B cell (primary cell): ENCODE measurements at regions of chr3 and their contacts with region 1.

Region 1: DNA sequence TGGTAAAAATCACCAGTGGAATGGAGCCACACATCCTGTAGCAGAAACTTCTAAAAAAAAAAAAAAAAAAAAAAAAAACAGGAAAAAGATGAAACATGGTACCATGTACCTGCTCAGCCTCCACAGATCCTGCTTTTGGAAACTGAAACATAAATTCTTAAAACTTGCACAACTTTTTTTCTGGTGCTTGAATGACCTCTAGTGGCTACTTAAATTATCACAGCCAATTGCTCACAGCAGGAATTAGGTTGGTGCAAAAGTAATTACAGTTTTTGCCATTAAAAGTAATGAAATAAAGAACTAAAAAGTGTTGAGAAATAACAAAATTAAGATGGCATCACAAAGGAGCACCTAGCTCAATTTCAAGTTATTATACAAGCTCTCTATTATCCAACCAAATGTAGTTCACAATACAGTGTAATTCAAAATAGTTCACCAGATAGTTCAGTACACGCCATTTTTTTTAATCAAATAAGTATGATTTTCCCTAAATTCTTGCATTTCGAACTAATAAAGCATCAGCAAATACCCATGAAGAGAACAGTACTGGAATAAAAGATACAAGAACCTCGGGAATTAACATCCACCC is 80.6 kb downstream of the ULK4 start:
- DNase-seq: peak; percentile 67
- ATAC-seq: no peak
- H3K4me3 ChIP-seq: no peak overlapping the region
- H3K4me3 Mint-ChIP-seq: no peak overlapping the region
- H3K27ac ChIP-seq: no peak overlapping the region
- H3K27ac Mint-ChIP-seq: no peak overlapping the region
- H3K4me1 ChIP-seq: no peaks in the 10 kb centered on the region
- H3K4me1 Mint-ChIP-seq: no peaks in the 10 kb centered on the region
- H3K27me3 ChIP-seq: no peaks in the 10 kb centered on the region
- H3K27me3 Mint-ChIP-seq: no peaks in the 10 kb centered on the region
- CTCF ChIP-seq: peak; percentile 82

Region 2: DNA sequence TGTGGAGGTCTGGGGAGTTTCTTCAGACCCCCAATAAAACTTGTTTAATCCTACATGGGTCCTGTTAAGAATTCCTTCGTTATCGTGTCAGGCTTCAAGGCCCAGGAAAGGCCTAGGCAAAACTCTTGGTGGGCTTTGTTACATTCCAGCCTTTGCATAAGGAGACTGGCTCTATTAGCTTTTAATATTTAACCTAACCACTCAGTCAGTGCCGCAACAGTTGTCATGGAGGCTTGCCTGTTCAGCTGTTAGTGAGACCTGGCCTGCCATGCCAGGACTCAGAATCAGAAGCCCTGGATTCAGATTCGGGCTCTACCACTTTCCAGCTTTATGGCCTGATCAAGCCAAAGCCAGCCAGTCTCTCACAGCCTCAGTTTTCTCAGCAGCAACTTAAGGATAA is 1552.3 kb before region 1 on chr3:
- CTCF ChIA-PET with region 1: interaction called, 19 read pairs
- POLR2A ChIA-PET with region 1: no interaction called
- intact Hi-C with region 1: loop called (anchors 1 kb)
- DNase-seq: no peak
- ATAC-seq: no peak
- H3K4me3 ChIP-seq: no peak overlapping the region
- H3K4me3 Mint-ChIP-seq: no peak overlapping the region
- H3K27ac ChIP-seq: no peak overlapping the region
- H3K27ac Mint-ChIP-seq: no peak overlapping the region
- H3K4me1 ChIP-seq: peaks cover 0 to 5% of the 10 kb centered on the region in 2 donors
- H3K4me1 Mint-ChIP-seq: peaks cover 3% of the 10 kb centered on the region
- H3K27me3 ChIP-seq: no peaks in the 10 kb centered on the region
- H3K27me3 Mint-ChIP-seq: peaks cover 7% of the 10 kb centered on the region
- CTCF ChIP-seq: no peak

Region 3: GRCh38 chr3:40961104-40961857 is 920.0 kb before region 1 on chr3:
- CTCF ChIA-PET with region 1: no interaction called
- POLR2A ChIA-PET with region 1: no interaction called
- intact Hi-C with region 1: loop called (anchors 10 kb)
- DNase-seq: no peak
- ATAC-seq: peak; percentile 31
- H3K4me3 ChIP-seq: no peak overlapping the region
- H3K4me3 Mint-ChIP-seq: no peak overlapping the region
- H3K27ac ChIP-seq: no peak overlapping the region
- H3K27ac Mint-ChIP-seq: no peak overlapping the region
- H3K4me1 ChIP-seq: no peaks in the 10 kb centered on the region
- H3K4me1 Mint-ChIP-seq: peaks cover 5% of the 10 kb centered on the region
- H3K27me3 ChIP-seq: no peaks in the 10 kb centered on the region
- H3K27me3 Mint-ChIP-seq: no peaks in the 10 kb centered on the region
- CTCF ChIP-seq: no peak